Activated CD4-positive, alpha-beta memory T cell treated with anti-CD3 and anti-CD28 coated beads for 36 hours (primary cell): ENCODE measurements at regions of chr11 and their contacts with region 1.

Region 1: DNA sequence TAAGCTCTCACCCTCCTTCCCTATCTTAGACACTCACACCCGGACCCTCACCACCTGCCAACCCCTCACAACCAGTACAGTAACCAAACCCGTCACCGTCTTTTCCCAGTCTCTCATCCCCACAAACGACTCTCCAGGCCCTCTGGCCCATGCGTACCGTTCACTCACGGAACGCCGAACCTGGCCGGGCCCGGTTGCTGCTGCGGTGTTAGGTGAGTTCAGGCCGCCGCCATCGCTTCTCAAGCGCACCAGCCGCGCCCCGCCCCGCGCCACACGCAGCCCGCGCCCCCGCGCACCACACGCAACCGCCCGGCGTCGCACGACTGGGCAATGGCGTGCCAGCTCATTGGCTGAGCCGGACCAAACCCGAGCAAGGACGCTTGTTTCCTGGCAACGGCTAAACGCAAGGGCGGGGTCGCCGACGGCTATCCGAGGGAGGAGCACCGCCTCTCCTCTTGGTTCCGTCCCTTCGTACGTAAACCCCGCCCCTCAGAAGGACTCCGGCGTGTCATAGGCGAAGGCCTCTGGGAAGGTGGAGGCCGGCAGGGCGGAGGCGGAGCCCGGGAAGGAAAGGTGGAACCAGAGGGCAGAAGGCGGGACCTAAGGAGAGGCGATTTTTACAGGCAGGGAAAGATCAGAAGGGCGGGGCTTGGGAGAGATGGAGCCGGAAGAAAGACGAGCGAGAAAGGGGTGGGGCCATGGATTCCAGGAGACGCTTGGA is at the start of gene FHIP1B:
- DNase-seq: peak; percentile 100
- H3K4me3 Mint-ChIP-seq: peak within 1 kb of the TSS; percentile 97
- H3K27ac Mint-ChIP-seq: peak within 1 kb of the TSS; percentile 91
- H3K4me1 Mint-ChIP-seq: peaks cover 38% of the 10 kb centered on the region
- H3K27me3 Mint-ChIP-seq: no peaks in the 10 kb centered on the region
- total RNA-seq, gene FHIP1B: 15.3 to 15.8 TPM

Region 2: GRCh38 chr11:4607781-4608666 is 1626.5 kb before region 1 on chr11 and contains the start of gene TRIM68:
- CTCF ChIA-PET with region 1: no interaction called
- POLR2A ChIA-PET with region 1: no interaction called
- intact Hi-C with region 1: loop called (anchors 10 kb)
- DNase-seq: peak; percentile 97
- H3K4me3 Mint-ChIP-seq: peak within 1 kb of the TSS; percentile 93
- H3K27ac Mint-ChIP-seq: peak within 1 kb of the TSS; percentile 87
- H3K4me1 Mint-ChIP-seq: peaks cover 34% of the 10 kb centered on the region
- H3K27me3 Mint-ChIP-seq: no peaks in the 10 kb centered on the region
- total RNA-seq, gene TRIM68: 8.7 to 9.2 TPM

Region 3: DNA sequence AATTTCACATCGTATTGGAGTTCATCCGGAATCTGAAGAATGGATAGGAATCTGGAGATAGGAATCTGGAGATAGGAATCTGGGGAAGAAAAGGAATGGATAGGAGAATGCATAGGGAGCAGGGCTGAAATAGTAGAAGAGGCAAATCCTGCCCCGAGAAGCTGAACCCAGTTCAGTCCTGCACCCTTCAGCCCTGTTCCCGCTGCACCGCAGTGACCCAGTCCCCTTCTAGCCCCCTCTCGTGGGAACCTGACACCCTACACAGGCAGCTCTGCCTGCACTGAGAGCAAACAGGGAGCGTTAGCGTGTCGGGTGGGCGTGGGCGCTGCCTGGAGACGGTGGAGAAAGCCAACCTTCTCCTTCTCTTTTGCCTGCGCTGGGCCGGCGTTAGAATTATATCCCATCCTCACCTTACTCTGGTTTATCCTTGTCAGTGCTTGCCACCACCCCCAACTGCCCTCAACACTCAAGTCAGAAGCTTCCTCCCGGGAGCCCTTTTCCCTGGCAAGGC is 24.1 kb after region 1 on chr11:
- CTCF ChIA-PET with region 1: no interaction called
- POLR2A ChIA-PET with region 1: no interaction called
- intact Hi-C with region 1: loop called (anchors 1 kb)
- DNase-seq: peak; percentile 28
- H3K4me3 Mint-ChIP-seq: no peak overlapping the region
- H3K27ac Mint-ChIP-seq: no peak overlapping the region
- H3K4me1 Mint-ChIP-seq: no peaks in the 10 kb centered on the region
- H3K27me3 Mint-ChIP-seq: peaks cover 11% of the 10 kb centered on the region

Region 4: GRCh38 chr11:6362873-6363678 is 128.5 kb after region 1 on chr11:
- CTCF ChIA-PET with region 1: interaction called, 12 read pairs
- POLR2A ChIA-PET with region 1: no interaction called
- intact Hi-C with region 1: no loop called
- DNase-seq: peak; percentile 85
- H3K4me3 Mint-ChIP-seq: no peak overlapping the region
- H3K27ac Mint-ChIP-seq: no peak overlapping the region
- H3K4me1 Mint-ChIP-seq: peaks cover 3% of the 10 kb centered on the region
- H3K27me3 Mint-ChIP-seq: no peaks in the 10 kb centered on the region

Region 5: DNA sequence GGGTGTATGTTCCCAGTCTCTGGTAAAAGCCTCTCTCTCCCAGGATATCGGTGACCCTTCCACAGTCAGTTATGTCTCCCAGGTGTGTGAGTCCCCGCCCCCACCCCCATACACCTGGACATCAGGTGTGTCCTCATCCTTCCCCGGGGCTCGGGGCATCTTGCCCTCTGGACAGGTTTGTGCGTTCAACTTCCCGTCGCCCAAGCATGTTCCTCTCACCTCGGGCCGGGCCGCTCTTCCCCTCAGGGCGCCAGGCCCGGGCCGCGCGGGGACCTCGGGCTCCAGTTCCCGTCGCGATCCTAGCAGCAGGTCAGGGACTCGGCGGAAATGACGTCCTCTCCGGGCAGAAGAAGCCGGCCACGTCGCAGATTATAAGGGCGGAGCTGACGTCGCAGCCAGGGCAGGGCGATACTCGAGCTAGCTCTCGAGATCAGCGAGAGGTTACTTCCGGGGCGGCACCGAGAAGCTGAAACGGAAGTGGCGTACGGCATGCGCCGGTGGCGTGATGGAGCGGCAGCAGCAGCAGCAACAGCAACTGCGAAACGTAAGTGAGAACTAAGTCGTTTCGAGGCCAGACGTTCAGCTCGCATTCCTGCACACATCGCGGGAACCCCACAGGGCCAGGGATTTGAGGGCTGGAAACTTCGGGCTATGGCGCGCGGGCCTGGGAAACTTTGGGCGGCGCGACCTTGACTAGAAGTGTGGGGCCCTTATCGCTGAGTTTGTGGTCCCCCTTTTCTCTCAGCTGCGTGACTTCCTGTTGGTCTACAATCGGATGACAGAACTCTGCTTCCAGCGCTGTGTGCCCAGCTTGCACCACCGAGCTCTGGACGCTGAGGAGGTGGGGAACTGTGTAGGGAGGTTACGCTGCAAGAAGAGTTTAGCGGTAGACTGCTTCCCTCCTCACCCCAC is 246.7 kb after region 1 on chr11 and contains the starts of genes ARFIP2 and TIMM10B:
- CTCF ChIA-PET with region 1: no interaction called
- POLR2A ChIA-PET with region 1: no interaction called
- intact Hi-C with region 1: loop called (anchors 1 kb)
- DNase-seq: peak; percentile 99
- H3K4me3 Mint-ChIP-seq: peak within 1 kb of the TSS; percentile 91
- H3K27ac Mint-ChIP-seq: peak within 1 kb of the TSS; percentile 96
- H3K4me1 Mint-ChIP-seq: peaks cover 35% of the 10 kb centered on the region
- H3K27me3 Mint-ChIP-seq: no peaks in the 10 kb centered on the region
- total RNA-seq, gene ARFIP2: 35.1 to 37.8 TPM
- total RNA-seq, gene TIMM10B: 40.2 to 41.3 TPM

Region 6: GRCh38 chr11:6737872-6738466 is 503.4 kb after region 1 on chr11:
- CTCF ChIA-PET with region 1: no interaction called
- POLR2A ChIA-PET with region 1: no interaction called
- intact Hi-C with region 1: loop called (anchors 5 kb)
- DNase-seq: peak; percentile 67
- H3K4me3 Mint-ChIP-seq: no peak overlapping the region
- H3K27ac Mint-ChIP-seq: peak overlapping the region; percentile 53
- H3K4me1 Mint-ChIP-seq: peaks cover 89% of the 10 kb centered on the region
- H3K27me3 Mint-ChIP-seq: no peaks in the 10 kb centered on the region